ENCODE measurements at regions of chr14 and their contacts with region 1.

Region 1: GRCh38 chr14:45083971-45084722 is at the start of gene PRPF39:
- DNase-seq: peak; percentile 97 to 98
- ATAC-seq: peak; percentile 100
- H3K4me3 ChIP-seq: peak within 1 kb of the TSS; percentile 64 to 79
- H3K27ac ChIP-seq: peak within 1 kb of the TSS in 1 of 2 donors; percentile 0
- H3K4me1 ChIP-seq: peaks cover 3 to 4% of the 10 kb centered on the region in 2 donors
- H3K27me3 ChIP-seq: no peaks in the 10 kb centered on the region
- total RNA-seq, gene PRPF39: 30.4 to 51.1 TPM

Region 2: GRCh38 chr14:44897045-44897844 is 186.9 kb before region 1 on chr14:
- intact Hi-C with region 1: loop called in 1 of 2 experiments (anchors 5 kb)
- DNase-seq: peak; percentile 98 to 99
- ATAC-seq: peak; percentile 98
- H3K4me3 ChIP-seq: peak overlapping the region; percentile 69 to 89
- H3K27ac ChIP-seq: peak overlapping the region; percentile 91 to 92
- H3K4me1 ChIP-seq: peaks cover 0 to 2% of the 10 kb centered on the region in 2 donors
- H3K27me3 ChIP-seq: no peaks in the 10 kb centered on the region

Region 3: GRCh38 chr14:44912041-44912869 is 171.9 kb before region 1 on chr14:
- intact Hi-C with region 1: loop called in 1 of 2 experiments (anchors 5 kb)
- DNase-seq: peak in 1 of 2 donors; percentile 74
- ATAC-seq: peak; percentile 69
- H3K4me3 ChIP-seq: peak overlapping the region; percentile 28 to 32
- H3K27ac ChIP-seq: no peak overlapping the region
- H3K4me1 ChIP-seq: no peaks in the 10 kb centered on the region
- H3K27me3 ChIP-seq: no peaks in the 10 kb centered on the region

Region 4: DNA sequence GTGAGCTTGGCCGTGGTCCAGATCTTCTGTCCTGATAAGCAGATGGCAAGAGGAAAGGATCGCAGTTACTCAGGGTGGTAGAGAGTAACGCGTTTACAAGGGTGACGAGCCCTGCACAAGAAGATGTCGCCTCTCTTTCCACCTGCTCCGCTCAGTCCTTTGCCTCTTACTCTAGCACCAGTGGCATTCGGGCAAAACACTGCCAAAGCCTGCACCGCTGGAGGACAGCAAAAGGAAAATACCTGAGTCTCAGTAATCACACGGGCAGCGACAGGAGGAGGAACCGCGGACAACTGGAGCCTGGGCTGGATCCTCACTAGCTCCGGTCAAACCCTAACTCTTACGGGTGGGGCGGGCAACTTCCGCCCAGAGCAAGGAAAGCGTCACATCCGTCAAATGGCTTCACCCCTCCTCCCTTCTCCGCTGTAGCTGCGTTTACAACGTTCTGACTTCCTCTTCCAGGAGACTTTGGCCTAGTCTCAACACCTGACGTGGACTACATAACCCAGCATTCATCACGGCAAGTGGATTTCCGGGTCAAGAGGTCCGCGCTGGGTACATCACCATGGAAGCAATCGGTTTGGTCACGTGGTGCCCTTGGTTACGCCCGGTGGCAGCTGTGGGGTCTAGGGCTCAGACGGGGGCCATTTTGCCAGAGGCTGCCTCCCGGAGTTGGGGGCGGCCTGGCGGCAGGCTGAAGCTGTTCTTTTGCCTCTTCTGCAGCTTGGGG is 122.4 kb before region 1 on chr14 and contains the starts of genes KLHL28 and TOGARAM1:
- intact Hi-C with region 1: loop called in 1 of 2 experiments (anchors 5 kb)
- DNase-seq: peak; percentile 97 to 98
- ATAC-seq: peak; percentile 99
- H3K4me3 ChIP-seq: peak within 1 kb of the TSS; percentile 83 to 87
- H3K27ac ChIP-seq: peak within 1 kb of the TSS in 1 of 2 donors; percentile 88
- H3K4me1 ChIP-seq: peaks cover 5 to 6% of the 10 kb centered on the region in 2 donors
- H3K27me3 ChIP-seq: no peaks in the 10 kb centered on the region
- total RNA-seq, gene KLHL28: 17.3 to 18.8 TPM
- total RNA-seq, gene TOGARAM1: 12.4 to 21.4 TPM

Region 5: GRCh38 chr14:45253068-45253753 is 169.1 kb after region 1 on chr14 and contains the start of gene MIS18BP1:
- intact Hi-C with region 1: loop called in 1 of 2 experiments (anchors 2 kb)
- DNase-seq: peak; percentile 97 to 98
- ATAC-seq: peak; percentile 98
- H3K4me3 ChIP-seq: peak within 1 kb of the TSS; percentile 79 to 83
- H3K27ac ChIP-seq: peak within 1 kb of the TSS; percentile 43 to 91
- H3K4me1 ChIP-seq: no peaks in the 10 kb centered on the region
- H3K27me3 ChIP-seq: no peaks in the 10 kb centered on the region
- total RNA-seq, gene MIS18BP1: 15.5 to 31.4 TPM

Measured in aorta (tissue), 5 donors.